ENCODE measurements at regions of chr22 and their contacts with region 1.

Region 1: GRCh38 chr22:45553351-45554039 is 50.8 kb downstream of the FBLN1 start:
- ATAC-seq: peak; percentile 6 to 81 (median 70)
- H3K4me3 ChIP-seq: no peak overlapping the region
- H3K27ac ChIP-seq: peak overlapping the region in 1 of 2 donors; percentile 2
- H3K4me1 ChIP-seq: peaks cover 9 to 38% of the 10 kb centered on the region in 2 donors

Region 2: DNA sequence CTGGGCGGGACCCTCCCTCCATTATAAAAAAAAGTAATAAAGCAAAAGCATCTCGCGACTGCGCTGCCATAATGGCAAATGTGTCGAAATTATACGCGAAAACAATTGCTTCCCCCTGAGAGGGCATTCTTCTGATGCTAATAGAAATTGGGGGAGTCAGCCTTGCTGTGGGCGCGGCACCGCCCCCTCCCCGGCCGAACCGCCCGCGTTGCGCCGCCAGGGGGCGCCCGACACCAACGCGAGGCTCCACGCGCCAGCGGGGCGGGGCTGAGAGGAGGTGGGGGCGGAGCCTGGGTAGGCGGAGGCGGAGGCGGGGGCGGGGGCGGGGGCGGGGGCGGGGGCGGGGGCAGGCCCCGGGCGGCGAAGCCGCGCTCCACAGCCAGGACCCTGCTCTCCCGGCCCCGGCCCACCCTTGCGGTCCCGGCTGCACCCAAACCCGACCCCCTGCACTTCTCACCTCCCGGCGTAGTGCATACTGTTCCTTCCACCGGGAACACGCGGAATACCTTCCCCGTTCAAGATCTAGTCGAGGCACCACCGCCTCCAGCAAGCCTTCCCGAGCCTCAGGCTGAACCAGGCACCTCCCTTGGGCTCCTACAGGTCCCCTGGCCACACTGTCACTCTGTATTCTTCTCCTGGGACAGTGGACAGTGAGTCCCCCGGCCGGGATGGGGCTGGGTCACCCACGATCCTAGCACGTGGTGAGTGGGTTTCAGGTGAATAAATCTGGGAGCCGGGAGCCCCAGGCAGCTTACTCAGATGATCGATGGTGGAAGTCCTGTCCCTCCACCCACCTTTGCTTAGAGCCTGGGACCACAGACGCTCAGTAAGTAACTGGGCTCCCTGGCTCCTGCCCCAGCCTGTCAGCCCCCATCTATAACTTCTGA is 284.3 kb before region 1 on chr22:
- in situ Hi-C with region 1: loop called in 4 of 9 experiments (anchors 10 to 25 kb)
- ATAC-seq: peak; percentile 61 to 91 (median 66)
- H3K4me3 ChIP-seq: peak overlapping the region; percentile 35 to 50 (median 47)
- H3K27ac ChIP-seq: peak overlapping the region; percentile 85 to 90
- H3K4me1 ChIP-seq: peaks cover 2 to 3% of the 10 kb centered on the region in 2 donors

Region 3: GRCh38 chr22:45284705-45285262 is 268.7 kb before region 1 on chr22 and contains the start of gene UPK3A:
- in situ Hi-C with region 1: loop called in 3 of 9 experiments (anchors 25 kb)
- ATAC-seq: peak; percentile 67 to 95 (median 85)
- H3K4me3 ChIP-seq: peak within 1 kb of the TSS; percentile 12 to 25 (median 13)
- H3K27ac ChIP-seq: no peak within 1 kb of the TSS
- H3K4me1 ChIP-seq: peaks cover 3 to 10% of the 10 kb centered on the region in 2 donors
- total RNA-seq, gene UPK3A: not detected

Region 4: DNA sequence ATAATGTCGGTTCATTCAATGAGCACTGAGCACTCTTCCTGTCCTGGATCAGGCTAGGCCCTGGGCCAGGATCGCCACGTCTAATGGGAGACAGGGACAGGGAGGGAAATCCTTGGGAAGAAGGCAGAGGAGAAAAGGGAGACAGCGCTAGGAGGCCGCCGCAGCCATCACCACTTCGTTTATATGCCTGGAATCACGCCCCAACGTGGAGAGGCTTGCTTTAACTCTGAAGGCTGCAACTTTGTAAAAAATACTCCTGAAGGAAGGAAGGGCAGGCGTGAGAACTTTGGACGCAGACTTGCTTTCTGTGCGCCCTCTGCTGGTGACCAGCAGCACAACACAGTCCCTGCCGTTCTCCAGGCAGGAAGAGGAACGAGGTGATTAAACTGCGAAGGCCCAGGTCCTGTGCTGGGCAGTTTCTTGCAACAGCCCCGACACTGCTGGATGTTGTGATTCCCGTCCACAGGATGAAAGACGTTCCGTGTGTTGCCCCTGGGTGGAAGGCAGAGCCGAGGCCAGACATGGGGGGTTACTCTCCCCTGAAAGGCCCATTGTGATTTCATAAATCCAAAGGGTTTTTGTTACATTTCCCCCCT is 117.9 kb before region 1 on chr22:
- in situ Hi-C with region 1: loop called in 2 of 9 experiments (anchors 10 to 25 kb)
- ATAC-seq: peak; percentile 94 to 99 (median 97)
- H3K4me3 ChIP-seq: no peak overlapping the region
- H3K27ac ChIP-seq: no peak overlapping the region
- H3K4me1 ChIP-seq: peaks cover 0 to 5% of the 10 kb centered on the region in 2 donors

Region 5: DNA sequence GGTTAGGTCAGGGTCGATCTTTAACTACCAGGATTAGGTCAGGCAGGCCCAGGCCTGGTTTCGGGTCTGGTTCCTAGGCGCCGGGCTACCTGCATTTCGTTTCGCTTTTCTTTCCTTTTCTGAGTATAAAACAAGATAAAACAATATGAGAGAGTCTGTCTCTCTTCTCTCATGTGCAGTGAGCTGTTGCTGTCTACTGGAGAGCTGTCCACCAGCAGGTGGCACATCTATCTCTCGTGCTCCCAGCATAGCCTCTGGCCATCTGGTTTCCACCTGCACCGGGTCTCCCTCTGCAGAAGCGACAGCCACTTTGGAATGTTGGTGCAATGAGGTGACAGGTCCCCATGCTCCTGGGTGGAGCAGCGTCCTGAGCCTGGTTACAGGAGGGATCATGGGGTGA is 112.4 kb before region 1 on chr22:
- in situ Hi-C with region 1: loop called in 2 of 9 experiments (anchors 10 to 25 kb)
- ATAC-seq: peak; percentile 92 to 99 (median 97)
- H3K4me3 ChIP-seq: no peak overlapping the region
- H3K27ac ChIP-seq: no peak overlapping the region
- H3K4me1 ChIP-seq: no peaks in the 10 kb centered on the region